ENCODE measurements at regions of chr2 and their contacts with region 1.

Region 1: DNA sequence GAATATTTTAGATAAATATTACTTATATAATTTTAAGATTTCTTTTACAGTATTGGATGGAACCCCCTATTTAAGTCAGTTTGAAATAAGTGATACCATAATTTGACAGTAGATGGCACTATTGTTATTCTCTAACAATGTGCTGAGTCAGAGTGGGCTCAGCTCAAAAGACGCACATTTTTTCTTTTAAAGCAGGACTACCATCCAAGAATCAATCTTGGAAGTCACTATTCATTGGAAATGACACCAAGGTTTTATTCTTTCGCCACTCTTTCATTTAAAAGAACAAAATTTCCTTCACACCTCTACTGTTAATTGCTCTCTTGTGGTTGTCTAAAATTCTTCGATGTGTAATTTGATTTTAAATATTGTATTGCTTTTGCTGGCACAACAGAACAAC is 32.6 kb upstream of the SPAG16 start:
- DNase-seq: peak in 1 of 2 donors; percentile 75
- ATAC-seq: peak; percentile 68 to 75 (median 72)
- H3K4me3 ChIP-seq: no peak overlapping the region
- H3K4me3 Mint-ChIP-seq: no peak overlapping the region
- H3K27ac ChIP-seq: no peak overlapping the region
- H3K27ac Mint-ChIP-seq: no peak overlapping the region
- H3K4me1 ChIP-seq: no peaks in the 10 kb centered on the region
- H3K4me1 Mint-ChIP-seq: peaks cover 0 to 5% of the 10 kb centered on the region in 2 donors
- H3K27me3 ChIP-seq: no peaks in the 10 kb centered on the region
- H3K27me3 Mint-ChIP-seq: peaks cover 3 to 14% of the 10 kb centered on the region in 2 donors
- CTCF ChIP-seq: peak; percentile 85

Region 2: GRCh38 chr2:212686285-212686895 is 565.2 kb before region 1 on chr2:
- intact Hi-C with region 1: loop called (anchors 5 kb)
- DNase-seq: peak; percentile 49 to 76
- ATAC-seq: peak; percentile 71 to 85 (median 76)
- H3K4me3 ChIP-seq: no peak overlapping the region
- H3K4me3 Mint-ChIP-seq: no peak overlapping the region
- H3K27ac ChIP-seq: no peak overlapping the region
- H3K27ac Mint-ChIP-seq: no peak overlapping the region
- H3K4me1 ChIP-seq: no peaks in the 10 kb centered on the region
- H3K4me1 Mint-ChIP-seq: no peaks in the 10 kb centered on the region
- H3K27me3 ChIP-seq: no peaks in the 10 kb centered on the region
- H3K27me3 Mint-ChIP-seq: peaks cover under 1 to 3% of the 10 kb centered on the region in 2 donors
- CTCF ChIP-seq: peak; percentile 92

Region 3: DNA sequence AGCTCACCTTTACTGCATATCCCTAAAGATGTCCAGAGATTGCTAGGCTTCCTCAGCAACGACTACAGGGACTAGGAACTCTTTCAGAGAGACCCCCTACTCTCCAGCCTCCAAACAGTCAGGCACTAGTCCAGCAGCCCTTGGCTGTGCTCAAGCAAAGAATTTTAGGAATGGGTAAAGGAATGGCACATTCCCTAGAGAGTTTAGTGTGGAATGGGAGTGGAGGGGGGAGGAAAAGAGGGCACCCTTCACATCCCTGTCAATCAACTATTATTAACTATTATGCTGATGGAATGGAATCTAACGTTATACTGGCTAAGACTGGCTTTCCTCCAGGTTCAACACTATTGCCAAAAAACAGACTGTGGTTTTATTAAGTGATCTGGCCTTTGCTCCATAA is 165.0 kb before region 1 on chr2:
- intact Hi-C with region 1: no loop called
- DNase-seq: no peak
- ATAC-seq: no peak
- H3K4me3 ChIP-seq: no peak overlapping the region
- H3K4me3 Mint-ChIP-seq: no peak overlapping the region
- H3K27ac ChIP-seq: no peak overlapping the region
- H3K27ac Mint-ChIP-seq: peak overlapping the region; percentile 79 to 83
- H3K4me1 ChIP-seq: peaks cover 4% of the 10 kb centered on the region
- H3K4me1 Mint-ChIP-seq: peaks cover 63 to 67% of the 10 kb centered on the region in 2 donors
- H3K27me3 ChIP-seq: no peaks in the 10 kb centered on the region
- H3K27me3 Mint-ChIP-seq: no peaks in the 10 kb centered on the region
- CTCF ChIP-seq: no peak

Region 4: DNA sequence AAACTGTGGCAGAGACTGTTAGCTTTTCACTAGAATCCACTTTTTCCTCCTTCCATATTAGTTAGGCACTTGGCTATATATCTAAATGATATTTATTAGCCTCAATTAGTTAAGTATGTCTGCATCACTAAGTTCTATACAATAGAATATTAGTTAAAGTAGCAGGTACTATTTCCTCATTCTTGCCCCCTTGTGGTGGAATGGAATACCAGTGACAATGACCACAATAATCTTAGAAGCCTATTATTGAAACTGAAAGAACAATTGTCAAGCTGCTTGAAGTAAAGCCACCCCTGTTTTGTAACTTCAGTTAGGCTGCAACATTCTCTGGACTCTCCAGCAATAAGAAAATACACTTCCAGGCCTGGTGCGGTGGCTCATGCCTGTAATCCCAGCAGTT is 682.9 kb after region 1 on chr2:
- intact Hi-C with region 1: loop called (anchors 5 kb)
- DNase-seq: peak in 1 of 2 donors; percentile 51
- ATAC-seq: peak in 1 of 3 donors; percentile 29
- H3K4me3 ChIP-seq: no peak overlapping the region
- H3K4me3 Mint-ChIP-seq: no peak overlapping the region
- H3K27ac ChIP-seq: no peak overlapping the region
- H3K27ac Mint-ChIP-seq: no peak overlapping the region
- H3K4me1 ChIP-seq: no peaks in the 10 kb centered on the region
- H3K4me1 Mint-ChIP-seq: no peaks in the 10 kb centered on the region
- H3K27me3 ChIP-seq: no peaks in the 10 kb centered on the region
- H3K27me3 Mint-ChIP-seq: no peaks in the 10 kb centered on the region
- CTCF ChIP-seq: peak; percentile 26

Region 5: DNA sequence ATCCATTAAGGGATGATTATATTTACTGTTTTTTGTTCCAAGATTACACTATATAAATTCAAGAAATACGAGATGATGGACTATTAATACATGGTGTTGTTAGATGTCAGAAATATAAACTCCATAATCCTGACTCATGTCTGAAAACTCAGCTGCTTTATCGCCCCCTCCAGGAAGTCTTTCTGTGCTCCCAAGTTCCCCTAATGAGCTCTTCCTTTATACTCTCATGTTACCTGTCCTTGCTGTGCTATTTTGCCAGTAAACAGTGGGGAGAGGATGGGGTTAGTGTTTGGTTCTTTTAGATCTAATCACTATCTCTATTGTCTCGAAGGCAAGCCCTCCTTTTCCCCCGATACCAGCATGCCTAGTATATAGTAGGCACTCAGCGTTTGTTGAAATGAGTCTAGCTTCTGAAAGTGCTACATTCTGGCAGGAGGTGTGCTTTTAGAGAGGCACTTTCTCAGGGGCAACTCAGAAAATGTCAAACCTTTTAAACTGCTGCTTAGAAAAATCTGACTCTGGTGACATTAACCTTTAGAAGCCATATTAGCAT is 1579.3 kb after region 1 on chr2:
- intact Hi-C with region 1: loop called (anchors 10 kb)
- DNase-seq: peak in 1 of 2 donors; percentile 56
- ATAC-seq: peak in 1 of 3 donors; percentile 46
- H3K4me3 ChIP-seq: no peak overlapping the region
- H3K4me3 Mint-ChIP-seq: no peak overlapping the region
- H3K27ac ChIP-seq: no peak overlapping the region
- H3K27ac Mint-ChIP-seq: no peak overlapping the region
- H3K4me1 ChIP-seq: no peaks in the 10 kb centered on the region
- H3K4me1 Mint-ChIP-seq: no peaks in the 10 kb centered on the region
- H3K27me3 ChIP-seq: peaks cover 2% of the 10 kb centered on the region
- H3K27me3 Mint-ChIP-seq: no peaks in the 10 kb centered on the region
- CTCF ChIP-seq: no peak

Measured in natural killer cell (primary cell).